BJ (cell line): ENCODE measurements at regions of chr14 and their contacts with region 1.

Region 1: DNA sequence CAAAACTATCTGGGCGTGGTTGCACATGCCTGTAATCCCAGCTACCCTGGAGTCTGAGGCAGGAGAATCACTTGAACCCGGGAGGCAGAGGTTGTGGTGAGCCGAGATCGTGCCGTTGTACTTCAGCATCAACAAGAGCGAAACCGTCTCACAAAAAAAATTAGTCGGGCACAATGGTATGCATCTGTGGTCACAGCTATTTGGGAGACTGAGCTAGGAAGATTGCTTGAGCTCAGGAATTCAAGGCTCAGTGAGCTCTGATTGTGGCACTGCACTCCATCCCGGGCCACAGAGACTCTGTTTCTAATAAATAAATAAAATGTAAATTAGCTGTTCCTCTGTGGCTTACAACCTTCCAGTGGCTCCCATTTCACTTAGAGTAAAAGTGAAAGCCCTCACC is 28.0 kb downstream of the RCOR1 start:
- DNase-seq: peak; percentile 12
- H3K4me3 ChIP-seq: no peak overlapping the region
- H3K27me3 ChIP-seq: no peaks in the 10 kb centered on the region
- CTCF ChIP-seq: no peak

Region 2: GRCh38 chr14:101992708-101993107 is 627.7 kb before region 1 on chr14:
- CTCF ChIA-PET with region 1: no interaction called
- POLR2A ChIA-PET with region 1: no interaction called
- DNase-seq: no peak
- H3K4me3 ChIP-seq: no peak overlapping the region
- H3K27me3 ChIP-seq: no peaks in the 10 kb centered on the region
- CTCF ChIP-seq: no peak

Region 3: DNA sequence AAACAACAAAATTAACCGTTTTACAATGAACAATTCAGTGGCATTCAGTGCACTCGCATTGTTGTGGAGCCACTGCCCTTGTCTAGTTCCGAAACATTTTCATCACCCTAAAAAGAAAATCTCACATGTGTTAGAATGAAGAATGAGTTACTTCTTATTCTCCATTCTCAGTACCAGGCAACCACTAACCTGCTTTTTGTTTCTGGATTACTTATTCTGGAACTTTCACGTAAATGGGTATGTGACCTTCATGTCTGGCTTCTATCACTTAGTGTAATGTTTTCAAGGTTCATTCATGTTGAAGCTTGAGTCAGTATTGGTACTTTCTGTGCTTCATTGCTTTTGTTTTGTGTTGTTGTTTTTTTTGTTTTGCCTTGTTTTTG is 12.4 kb before region 1 on chr14:
- CTCF ChIA-PET with region 1: interaction called, 13 read pairs
- POLR2A ChIA-PET with region 1: interaction called, 16 read pairs
- DNase-seq: no peak
- H3K4me3 ChIP-seq: no peak overlapping the region
- H3K27me3 ChIP-seq: no peaks in the 10 kb centered on the region
- CTCF ChIP-seq: no peak

Region 4: DNA sequence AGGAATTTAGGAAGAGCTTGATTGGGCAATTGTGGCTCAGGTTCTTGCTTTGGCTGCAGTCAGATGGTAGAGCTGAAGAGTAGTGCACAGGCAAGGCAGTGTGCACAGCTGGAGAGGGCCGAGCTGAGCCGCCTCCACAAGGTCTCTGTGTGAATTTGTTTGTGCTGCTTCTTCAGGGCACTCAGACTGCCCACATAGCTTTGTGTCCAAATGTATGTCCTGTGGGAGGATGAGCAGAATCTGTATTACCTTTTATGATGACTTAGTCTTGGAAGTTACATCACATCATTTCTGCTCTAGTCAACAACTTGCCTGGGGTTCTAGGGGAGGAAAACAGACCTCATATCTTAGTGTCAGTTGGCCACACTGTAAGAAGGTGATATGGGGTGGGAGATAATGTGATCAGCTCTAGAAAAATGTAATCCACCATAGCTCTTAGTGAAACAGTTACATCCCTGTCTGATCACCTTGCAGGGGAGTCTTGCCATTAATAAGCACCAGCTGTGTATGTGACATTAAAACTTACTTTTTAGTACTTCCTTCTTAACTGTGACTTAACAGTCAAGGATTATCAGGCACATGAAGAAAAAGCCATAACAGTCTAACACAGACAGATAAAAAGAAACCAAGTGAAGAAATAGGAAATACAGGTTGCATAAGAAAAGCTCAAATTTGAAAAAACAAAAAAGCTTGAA is 25.5 kb after region 1 on chr14:
- CTCF ChIA-PET with region 1: no interaction called
- POLR2A ChIA-PET with region 1: no interaction called
- DNase-seq: no peak
- H3K4me3 ChIP-seq: no peak overlapping the region
- H3K27me3 ChIP-seq: no peaks in the 10 kb centered on the region
- CTCF ChIP-seq: no peak